Endothelial cell of umbilical vein (primary cell): ENCODE measurements at regions of chr19 and their contacts with region 1.

Region 1: GRCh38 chr19:9584073-9584833 is at the start of gene ZNF121:
- DNase-seq: peak; percentile 82
- H3K4me3 ChIP-seq: peak within 1 kb of the TSS; percentile 72 to 97 (median 90)
- H3K27ac ChIP-seq: peak within 1 kb of the TSS; percentile 82
- H3K4me1 ChIP-seq: no peaks in the 10 kb centered on the region
- H3K27me3 ChIP-seq: no peaks in the 10 kb centered on the region
- CTCF ChIP-seq: no peak
- POLR2A ChIP-seq: peak; percentile 94
- total RNA-seq, gene ZNF121: 21.4 and 25.1 TPM in 2 replicates

Region 2: GRCh38 chr19:9205501-9206113 is 378.6 kb before region 1 on chr19:
- CTCF ChIA-PET with region 1: interaction called, 10 read pairs
- POLR2A ChIA-PET with region 1: no interaction called
- dilution Hi-C with region 1: no loop called
- intact Hi-C with region 1: loop called (anchors 10 kb)
- DNase-seq: peak; percentile 58
- H3K4me3 ChIP-seq: no peak overlapping the region
- H3K27ac ChIP-seq: no peak overlapping the region
- H3K4me1 ChIP-seq: no peaks in the 10 kb centered on the region
- H3K27me3 ChIP-seq: no peaks in the 10 kb centered on the region
- CTCF ChIP-seq: peak; percentile 74 to 87
- POLR2A ChIP-seq: no peak

Region 3: GRCh38 chr19:9309139-9309973 is 274.9 kb before region 1 on chr19 and contains the start of gene ZNF699:
- CTCF ChIA-PET with region 1: interaction called, 5 read pairs
- POLR2A ChIA-PET with region 1: no interaction called
- dilution Hi-C with region 1: no loop called
- intact Hi-C with region 1: loop called (anchors 2 kb)
- DNase-seq: peak; percentile 98
- H3K4me3 ChIP-seq: peak within 1 kb of the TSS; percentile 52 to 88 (median 67)
- H3K27ac ChIP-seq: peak within 1 kb of the TSS; percentile 55
- H3K4me1 ChIP-seq: peaks cover 7% of the 10 kb centered on the region
- H3K27me3 ChIP-seq: no peaks in the 10 kb centered on the region
- CTCF ChIP-seq: no peak
- POLR2A ChIP-seq: no peak
- total RNA-seq, gene ZNF699: 3.9 and 4.7 TPM in 2 replicates

Region 4: DNA sequence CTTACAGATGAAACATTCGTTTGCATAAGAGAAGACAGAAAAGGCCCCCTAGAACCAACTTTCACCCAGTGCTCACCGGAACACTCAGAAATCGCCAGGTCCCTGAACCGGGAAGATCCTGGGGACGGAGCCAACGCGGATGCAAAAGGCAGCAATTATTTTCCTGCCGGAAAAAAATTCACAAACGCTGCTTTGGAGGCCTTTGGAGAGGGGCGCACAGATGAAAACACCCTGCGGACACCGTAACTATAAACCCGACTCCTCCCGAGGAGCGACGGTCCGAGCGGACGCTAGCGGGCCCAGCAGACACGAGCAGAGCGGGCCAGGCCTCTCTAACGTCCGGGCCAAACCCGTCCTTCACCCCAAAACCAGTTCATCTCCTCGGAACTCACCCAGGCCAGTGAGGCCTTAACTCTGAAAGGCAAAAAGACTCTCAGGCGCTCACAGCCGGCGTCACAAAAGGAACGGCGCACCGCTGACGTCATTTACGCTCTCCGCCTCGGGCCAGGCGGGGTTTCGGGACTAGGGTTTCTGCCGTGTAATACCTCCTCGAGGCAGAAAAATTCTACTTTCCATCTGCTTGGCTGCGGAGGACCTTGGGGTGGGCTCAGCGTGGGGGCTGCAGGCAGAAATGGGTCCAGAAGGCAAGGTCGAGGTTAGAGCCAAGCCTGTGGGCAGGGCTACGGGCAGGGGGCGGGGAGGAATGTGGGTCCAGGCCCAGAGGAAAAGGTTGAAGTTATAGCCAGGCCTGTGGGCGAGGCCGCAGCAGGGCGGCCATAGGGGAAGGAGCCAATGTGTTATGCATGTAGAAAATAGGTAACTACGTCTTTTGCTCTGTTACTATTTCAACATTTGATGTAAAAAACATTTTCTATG is 45.8 kb before region 1 on chr19 and contains the start of gene ZNF426:
- CTCF ChIA-PET with region 1: interaction called, 4 read pairs
- POLR2A ChIA-PET with region 1: interaction called, 5 read pairs
- dilution Hi-C with region 1: no loop called
- intact Hi-C with region 1: loop called (anchors 2 kb)
- DNase-seq: peak; percentile 89
- H3K4me3 ChIP-seq: peak within 1 kb of the TSS; percentile 57 to 99 (median 59)
- H3K27ac ChIP-seq: peak within 1 kb of the TSS; percentile 82
- H3K4me1 ChIP-seq: peaks cover 5% of the 10 kb centered on the region
- H3K27me3 ChIP-seq: no peaks in the 10 kb centered on the region
- CTCF ChIP-seq: no peak
- POLR2A ChIP-seq: peak; percentile 54
- total RNA-seq, gene ZNF426: 14.6 and 16.1 TPM in 2 replicates

Region 5: DNA sequence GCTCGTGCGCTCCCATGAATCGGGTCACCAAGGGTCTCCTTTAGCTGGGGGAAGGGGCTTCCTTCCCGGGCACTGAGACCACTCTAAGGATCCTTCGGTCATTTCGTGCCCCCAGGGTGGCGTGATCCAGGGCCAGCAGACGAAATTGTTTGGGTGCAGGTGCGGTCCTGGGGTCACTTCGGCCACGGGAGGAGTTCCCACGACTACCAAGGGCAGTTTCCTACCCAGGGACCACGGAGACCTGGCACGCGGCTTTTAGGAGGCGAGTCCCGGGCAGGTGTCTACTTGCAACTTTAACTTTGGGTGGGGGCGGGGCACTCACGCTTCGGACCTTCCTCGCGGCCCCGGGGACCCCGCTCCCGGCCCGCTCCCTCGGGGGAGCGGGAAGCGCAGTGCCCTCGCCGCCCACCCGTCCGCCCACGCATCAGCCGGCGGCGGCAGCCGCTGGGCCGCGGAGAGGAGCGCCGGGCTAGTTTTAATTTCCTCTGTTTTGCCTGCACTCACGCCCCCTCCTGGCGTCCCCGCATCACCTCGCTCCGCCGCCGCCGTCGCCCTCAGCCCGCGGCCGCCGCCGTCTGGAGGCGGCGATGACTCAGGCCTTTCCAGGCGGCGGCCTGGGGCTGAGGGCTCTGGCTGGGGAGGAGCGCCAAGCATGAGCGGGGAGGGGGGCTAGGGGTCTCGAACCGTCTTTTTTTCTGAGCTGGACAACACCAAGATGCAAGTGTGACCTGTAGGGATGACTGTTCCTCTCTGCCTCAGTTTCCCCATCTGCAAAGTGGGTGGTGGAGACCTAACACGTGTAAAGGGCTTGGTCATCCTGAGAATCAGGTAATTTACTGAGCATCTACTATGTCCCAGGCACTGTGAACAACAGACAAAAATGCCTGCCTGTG is 330.3 kb after region 1 on chr19:
- CTCF ChIA-PET with region 1: no interaction called
- POLR2A ChIA-PET with region 1: no interaction called
- dilution Hi-C with region 1: no loop called
- intact Hi-C with region 1: loop called (anchors 5 kb)
- DNase-seq: peak; percentile 88
- H3K4me3 ChIP-seq: peak overlapping the region; percentile 38 to 56 (median 56)
- H3K27ac ChIP-seq: peak overlapping the region; percentile 8
- H3K4me1 ChIP-seq: peaks cover 7% of the 10 kb centered on the region
- H3K27me3 ChIP-seq: peaks cover 18 to 25% of the 10 kb centered on the region in 2 experiments
- CTCF ChIP-seq: peak; percentile 65 to 70
- POLR2A ChIP-seq: no peak